GM10248 (cell line): ENCODE measurements at regions of chr1 and their contacts with region 1.

Region 1: GRCh38 chr1:202968840-202969295 is 1.8 kb upstream of the CYB5R1 start:
- DNase-seq: peak; percentile 70
- CTCF ChIP-seq: peak; percentile 62

Region 2: GRCh38 chr1:202954057-202954745 is 14.7 kb before region 1 on chr1:
- CTCF ChIA-PET with region 1: interaction called, 10 read pairs
- POLR2A ChIA-PET with region 1: no interaction called
- DNase-seq: no peak
- CTCF ChIP-seq: no peak

Region 3: GRCh38 chr1:202987922-202988583 is 19.2 kb after region 1 on chr1:
- CTCF ChIA-PET with region 1: interaction called, 10 read pairs
- POLR2A ChIA-PET with region 1: no interaction called
- DNase-seq: no peak
- CTCF ChIP-seq: no peak

Region 4: GRCh38 chr1:202998836-202999750 is 30.2 kb after region 1 on chr1:
- CTCF ChIA-PET with region 1: interaction called, 19 read pairs
- POLR2A ChIA-PET with region 1: interaction called, 3 read pairs
- DNase-seq: peak; percentile 49
- CTCF ChIP-seq: peak; percentile 76